ENCODE measurements at regions of chr5 and their contacts with region 1.

Region 1: DNA sequence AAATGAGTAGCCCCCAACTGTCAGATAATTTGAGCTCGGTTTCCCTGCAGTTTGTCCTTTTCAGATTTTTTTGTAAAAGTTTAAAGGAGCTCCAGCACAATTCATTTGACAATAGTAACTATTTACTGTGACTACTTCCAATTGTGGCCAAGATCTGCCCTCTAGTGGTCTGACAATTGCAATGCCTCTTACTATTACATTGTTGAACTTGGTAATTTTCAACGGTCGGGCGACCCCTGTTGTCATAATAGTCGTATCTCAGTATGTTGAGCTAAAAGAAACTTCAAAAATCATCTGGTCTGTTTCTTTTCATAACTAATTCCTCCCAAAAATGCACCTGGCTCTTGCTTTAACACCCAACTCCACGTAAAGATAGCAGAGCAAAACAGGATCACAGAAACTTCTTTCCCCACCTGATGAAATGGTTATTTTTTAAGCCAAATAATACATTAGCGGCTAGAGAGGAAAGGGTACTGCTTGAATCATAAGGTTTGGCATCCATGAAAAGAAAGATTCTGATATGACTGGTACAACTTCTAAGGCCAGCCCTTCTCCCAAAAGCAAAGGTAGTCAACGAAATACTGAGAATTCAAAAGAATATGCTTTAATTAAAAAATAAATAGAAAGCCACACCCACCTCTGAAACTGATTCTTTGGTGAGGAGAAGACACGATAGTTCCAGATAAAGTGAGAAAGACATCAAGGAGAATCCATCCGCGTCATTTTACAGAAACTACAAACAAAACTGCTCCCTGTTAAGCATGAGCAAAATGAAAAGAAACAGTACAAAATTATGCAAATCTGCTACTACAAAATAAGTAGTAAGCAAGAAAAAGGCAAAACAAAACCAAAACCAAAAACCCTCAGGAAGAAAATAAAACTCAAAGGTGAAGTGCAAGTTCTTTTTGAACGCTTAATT is 76.9 kb upstream of the HTR4 start:
- DNase-seq: peak; percentile 77 to 95
- H3K4me3 ChIP-seq: no peak overlapping the region
- H3K27ac ChIP-seq: no peak overlapping the region
- H3K4me1 ChIP-seq: peaks cover 0 to 19% (median 12%) of the 10 kb centered on the region in 4 donors
- H3K27me3 ChIP-seq: no peaks in the 10 kb centered on the region
- CTCF ChIP-seq: peak in 5 of 7 experiments; percentile 79 to 91 (median 88)
- EP300 ChIP-seq: no peak
- POLR2A ChIP-seq: no peak

Region 2: GRCh38 chr5:148443998-148444397 is 287.2 kb before region 1 on chr5:
- intact Hi-C with region 1: loop called (anchors 5 kb)
- DNase-seq: peak; percentile 39 to 86
- H3K4me3 ChIP-seq: no peak overlapping the region
- H3K27ac ChIP-seq: no peak overlapping the region
- H3K4me1 ChIP-seq: peaks cover 0 to 4% (median 0%) of the 10 kb centered on the region in 4 donors
- H3K27me3 ChIP-seq: no peaks in the 10 kb centered on the region
- CTCF ChIP-seq: peak in 5 of 7 experiments; percentile 51 to 78 (median 68)
- EP300 ChIP-seq: no peak
- POLR2A ChIP-seq: no peak

Region 3: DNA sequence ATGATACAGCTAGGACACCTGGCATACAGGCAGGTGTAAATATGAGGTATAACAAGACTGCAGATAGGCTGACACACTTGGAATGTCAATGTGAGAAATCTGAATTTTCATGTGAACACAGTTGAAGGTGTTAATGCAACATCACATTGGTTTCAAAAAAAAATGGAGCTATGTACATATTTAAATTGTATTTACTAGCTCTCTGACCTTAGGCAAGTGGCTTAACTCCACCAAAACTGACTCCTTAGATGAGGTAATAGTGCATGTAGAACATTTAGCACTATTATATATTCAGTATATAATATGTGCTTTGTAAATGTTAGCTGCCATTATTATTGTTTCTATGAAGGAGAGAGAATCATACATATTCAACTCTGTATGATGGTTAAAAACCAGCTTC is 124.9 kb before region 1 on chr5:
- intact Hi-C with region 1: no loop called
- DNase-seq: no peak
- H3K4me3 ChIP-seq: no peak overlapping the region
- H3K27ac ChIP-seq: no peak overlapping the region
- H3K4me1 ChIP-seq: no peaks in the 10 kb centered on the region
- H3K27me3 ChIP-seq: no peaks in the 10 kb centered on the region
- CTCF ChIP-seq: no peak
- EP300 ChIP-seq: no peak
- POLR2A ChIP-seq: no peak

Region 4: GRCh38 chr5:149002053-149002452 is 270.9 kb after region 1 on chr5:
- intact Hi-C with region 1: loop called (anchors 10 kb)
- DNase-seq: peak in 1 of 2 donors; percentile 63
- H3K4me3 ChIP-seq: no peak overlapping the region
- H3K27ac ChIP-seq: no peak overlapping the region
- H3K4me1 ChIP-seq: peaks cover 0 to 41% (median 0%) of the 10 kb centered on the region in 4 donors
- H3K27me3 ChIP-seq: no peaks in the 10 kb centered on the region
- CTCF ChIP-seq: no peak
- EP300 ChIP-seq: no peak
- POLR2A ChIP-seq: no peak

Region 5: GRCh38 chr5:149035372-149035790 is 304.2 kb after region 1 on chr5:
- intact Hi-C with region 1: loop called (anchors 10 kb)
- DNase-seq: peak; percentile 76 to 91
- H3K4me3 ChIP-seq: no peak overlapping the region
- H3K27ac ChIP-seq: no peak overlapping the region
- H3K4me1 ChIP-seq: peaks cover 0 to 21% (median 2%) of the 10 kb centered on the region in 4 donors
- H3K27me3 ChIP-seq: no peaks in the 10 kb centered on the region
- CTCF ChIP-seq: peak in 5 of 7 experiments; percentile 64 to 81 (median 81)
- EP300 ChIP-seq: no peak
- POLR2A ChIP-seq: no peak

Region 6: GRCh38 chr5:149114403-149115312 is 383.5 kb after region 1 on chr5:
- intact Hi-C with region 1: loop called (anchors 10 kb)
- DNase-seq: peak; percentile 57 to 90
- H3K4me3 ChIP-seq: no peak overlapping the region
- H3K27ac ChIP-seq: no peak overlapping the region
- H3K4me1 ChIP-seq: peaks cover 0 to 6% (median 0%) of the 10 kb centered on the region in 4 donors
- H3K27me3 ChIP-seq: no peaks in the 10 kb centered on the region
- CTCF ChIP-seq: peak in 5 of 7 experiments; percentile 52 to 70 (median 63)
- EP300 ChIP-seq: no peak
- POLR2A ChIP-seq: no peak

Measured in stomach (tissue), 19 donors.